Posterior vena cava (tissue), 2 donors: ENCODE measurements at regions of chr11 and their contacts with region 1.

Region 1: GRCh38 chr11:1233331-1233715 is 10.5 kb downstream of the MUC5B start:
- DNase-seq: no peak

Region 2: GRCh38 chr11:1281326-1281973 is 48.1 kb after region 1 on chr11:
- intact Hi-C with region 1: loop called in 1 of 2 experiments (anchors 2 kb)
- DNase-seq: no peak

Region 3: DNA sequence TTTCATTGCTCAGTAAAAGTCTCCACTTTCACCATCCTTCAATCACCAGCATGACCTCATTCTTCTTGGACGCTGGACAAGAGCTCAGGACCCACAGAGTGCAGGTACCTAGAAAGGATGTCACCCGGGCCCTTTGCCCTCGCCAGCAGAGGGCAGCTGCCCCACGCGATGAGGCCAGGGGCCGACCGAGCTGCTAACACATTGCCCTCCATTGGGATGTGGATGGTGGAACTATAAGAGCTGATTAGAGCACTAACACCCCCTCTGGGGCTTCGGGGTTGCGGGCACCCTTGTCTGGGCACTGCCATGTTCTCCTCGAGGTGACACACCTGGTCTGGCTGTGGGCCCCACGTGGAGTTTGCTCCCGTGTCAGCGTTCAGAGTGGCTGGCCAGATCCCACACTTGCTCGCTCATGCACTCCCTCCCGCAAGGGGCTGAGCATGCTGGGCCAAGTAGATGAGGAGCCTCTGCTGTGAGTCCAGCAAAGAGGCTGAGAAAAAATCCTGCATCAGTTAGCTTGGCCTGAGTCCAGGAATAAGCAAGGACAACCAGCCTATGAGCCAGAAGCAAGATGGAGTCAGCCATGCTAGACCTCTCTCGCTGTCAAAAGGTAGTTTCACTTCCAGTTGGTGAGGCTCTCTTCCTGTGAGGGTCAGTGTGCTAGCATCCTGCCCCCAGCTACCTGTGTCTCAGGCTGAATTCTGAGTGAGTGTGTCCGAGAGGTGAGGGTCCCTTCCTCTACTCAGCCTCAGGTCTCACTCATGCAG is 473.5 kb after region 1 on chr11:
- intact Hi-C with region 1: no loop called
- DNase-seq: no peak